A549 (cell line): ENCODE measurements at regions of chr20 and their contacts with region 1.

Region 1: GRCh38 chr20:1503564-1504227 is 12.5 kb upstream of the SIRPB2 start:
- DNase-seq: peak; percentile 95
- ATAC-seq: peak; percentile 98 to 100
- H3K4me3 ChIP-seq: no peak overlapping the region
- H3K27ac ChIP-seq: no peak overlapping the region
- H3K4me1 ChIP-seq: peaks cover 9% of the 10 kb centered on the region; the same call in 1 of the 3 replicates
- CTCF ChIP-seq: peak; percentile 100
- EP300 ChIP-seq: no peak
- POLR2A ChIP-seq: no peak
- RAD21 ChIP-seq: peak; percentile 98 to 99

Region 2: DNA sequence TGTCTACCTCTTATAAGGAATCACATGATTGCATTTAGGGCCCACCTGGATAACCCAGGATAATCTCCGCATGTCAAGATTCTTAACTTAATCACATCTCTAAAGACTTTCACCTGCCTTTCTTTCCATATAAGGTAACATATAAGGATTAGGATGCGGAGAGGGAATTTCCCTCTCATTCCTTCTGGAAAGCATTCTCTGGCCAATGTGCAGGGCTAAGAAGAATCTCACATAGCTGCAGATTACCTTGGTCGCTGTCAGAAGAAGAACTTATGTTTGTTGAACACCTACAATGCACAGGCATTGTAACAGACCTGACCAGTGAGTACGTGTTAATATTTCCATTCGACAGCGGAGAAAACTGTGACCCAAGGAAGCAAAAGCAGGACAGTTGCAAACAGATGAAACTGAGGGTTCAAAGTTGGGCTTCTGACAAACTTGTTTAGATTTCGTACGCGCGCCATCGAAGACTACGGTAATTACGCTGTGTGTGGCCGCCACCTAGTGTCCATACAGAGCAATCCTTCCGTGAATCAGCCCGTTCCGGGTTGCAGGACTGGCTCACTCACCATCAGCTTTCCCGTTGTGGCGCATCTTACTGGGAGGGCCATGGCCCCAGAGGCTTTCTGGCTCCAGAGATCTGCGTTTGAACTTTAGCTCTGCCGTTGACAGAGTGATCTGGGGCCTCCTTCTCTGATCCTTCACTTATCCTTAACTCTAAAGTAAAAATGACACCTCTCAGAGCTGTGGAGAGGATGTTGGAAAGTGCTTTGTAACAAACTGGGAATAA is 290.9 kb before region 1 on chr20:
- CTCF ChIA-PET with region 1: interaction called, 31 read pairs
- POLR2A ChIA-PET with region 1: no interaction called
- DNase-seq: peak; percentile 82 to 83
- ATAC-seq: peak; percentile 96 to 99
- H3K4me3 ChIP-seq: no peak overlapping the region
- H3K27ac ChIP-seq: no peak overlapping the region
- H3K4me1 ChIP-seq: no peaks in the 10 kb centered on the region
- CTCF ChIP-seq: peak; percentile 92
- EP300 ChIP-seq: no peak
- POLR2A ChIP-seq: no peak
- RAD21 ChIP-seq: peak; percentile 89 to 91

Region 3: DNA sequence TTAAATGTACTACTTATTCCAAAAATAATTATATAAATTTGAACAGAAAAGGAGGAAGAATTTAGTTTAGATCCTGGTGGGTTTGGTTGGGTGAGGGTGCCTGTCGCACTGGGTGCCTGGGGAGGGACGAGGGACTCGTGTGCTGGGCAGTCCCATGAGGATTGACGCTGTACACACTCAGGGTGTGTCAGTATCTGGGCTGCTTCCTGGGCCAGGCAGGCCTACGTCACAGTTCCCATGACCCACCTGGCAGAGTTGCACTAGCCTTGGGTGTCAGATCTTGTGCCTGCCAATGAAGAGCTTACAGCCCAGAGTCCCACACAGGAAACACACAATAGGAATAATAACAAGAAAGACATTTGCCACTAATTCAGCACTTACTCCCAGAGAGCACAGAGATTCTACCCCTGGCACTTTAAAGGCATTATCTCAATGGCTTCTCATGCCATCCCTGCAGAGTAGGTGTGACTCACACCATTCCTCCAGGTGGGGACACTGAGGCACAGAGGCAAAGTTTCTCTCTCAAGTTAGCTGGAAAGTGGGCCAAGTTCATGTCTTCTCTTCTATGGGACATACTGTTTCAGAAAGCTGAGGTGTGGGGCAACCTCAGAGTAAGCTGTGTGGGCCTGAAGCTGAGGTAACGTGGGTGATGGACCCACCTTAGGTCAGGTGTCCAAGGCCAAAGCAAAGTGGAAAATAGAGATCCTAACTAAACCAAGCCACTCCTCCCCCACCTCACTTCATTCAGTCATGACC is 173.4 kb before region 1 on chr20:
- CTCF ChIA-PET with region 1: interaction called, 10 read pairs
- POLR2A ChIA-PET with region 1: interaction called, 3 read pairs
- DNase-seq: peak in 1 of 2 experiments; percentile 19
- ATAC-seq: no peak
- H3K4me3 ChIP-seq: no peak overlapping the region
- H3K27ac ChIP-seq: no peak overlapping the region
- H3K4me1 ChIP-seq: peaks cover 38% of the 10 kb centered on the region
- CTCF ChIP-seq: no peak
- EP300 ChIP-seq: no peak
- POLR2A ChIP-seq: no peak
- RAD21 ChIP-seq: no peak

Region 4: DNA sequence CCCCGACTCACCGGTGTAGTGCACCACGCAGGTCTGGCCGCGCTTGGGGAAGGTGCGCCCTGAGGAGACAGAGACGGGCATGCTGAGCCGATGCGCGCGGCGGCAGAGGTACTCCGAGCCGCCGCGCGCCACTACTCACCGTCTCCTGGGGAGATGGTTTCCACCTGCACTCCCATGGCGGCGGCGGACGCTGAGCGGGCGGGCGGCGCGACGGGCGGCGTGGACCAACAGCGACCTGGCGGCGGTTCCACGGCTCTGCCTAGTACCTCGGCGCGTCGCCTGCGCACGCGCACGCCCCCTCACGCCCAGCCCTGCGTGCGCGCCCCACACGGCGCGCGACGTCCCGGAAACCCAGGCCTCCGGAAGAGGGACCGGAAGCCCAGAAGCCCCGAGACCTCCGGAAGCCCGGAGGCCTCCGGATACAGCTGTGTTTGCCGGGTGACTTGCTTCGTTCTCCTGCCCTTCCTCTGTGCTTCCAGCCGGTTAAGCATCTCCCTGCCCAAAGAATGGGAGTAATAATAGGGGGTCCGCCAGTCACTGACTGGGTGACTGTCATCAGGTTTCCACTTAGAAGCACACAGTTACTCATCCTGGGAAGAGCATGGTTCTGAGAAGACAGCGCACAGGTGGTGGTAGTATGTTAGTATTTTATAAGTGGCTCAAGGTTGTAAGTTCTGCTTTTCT is 110.7 kb before region 1 on chr20 and contains the start of gene FKBP1A:
- CTCF ChIA-PET with region 1: interaction called, 15 read pairs
- POLR2A ChIA-PET with region 1: no interaction called
- DNase-seq: peak; percentile 91
- ATAC-seq: peak; percentile 96 to 98
- H3K4me3 ChIP-seq: peak within 1 kb of the TSS; percentile 96
- H3K27ac ChIP-seq: peak within 1 kb of the TSS; percentile 89 to 95
- H3K4me1 ChIP-seq: peaks cover 27% of the 10 kb centered on the region; the same call in 2 of the 3 replicates
- CTCF ChIP-seq: no peak
- EP300 ChIP-seq: no peak
- POLR2A ChIP-seq: peak; percentile 91
- RAD21 ChIP-seq: 0 out of 5 replicates have a peak, but pooled peaks of 1 of the 2 experiments have one; percentile 8
- polyA plus RNA-seq, gene FKBP1A: 535 and 848 TPM in 2 replicates

Region 5: GRCh38 chr20:1450926-1451491 is 52.7 kb before region 1 on chr20:
- CTCF ChIA-PET with region 1: interaction called, 89 read pairs
- POLR2A ChIA-PET with region 1: no interaction called
- DNase-seq: no peak
- ATAC-seq: no peak
- H3K4me3 ChIP-seq: no peak overlapping the region
- H3K27ac ChIP-seq: no peak overlapping the region
- H3K4me1 ChIP-seq: no peaks in the 10 kb centered on the region
- CTCF ChIP-seq: no peak
- EP300 ChIP-seq: no peak
- POLR2A ChIP-seq: no peak
- RAD21 ChIP-seq: no peak

Region 6: GRCh38 chr20:1491281-1491840 is 12.3 kb before region 1 on chr20 and contains the start of gene SIRPB2:
- CTCF ChIA-PET with region 1: interaction called, 129 read pairs
- POLR2A ChIA-PET with region 1: no interaction called
- DNase-seq: no peak
- ATAC-seq: no peak
- H3K4me3 ChIP-seq: no peak within 1 kb of the TSS
- H3K27ac ChIP-seq: no peak within 1 kb of the TSS
- H3K4me1 ChIP-seq: 0 out of 3 replicates have a peak, but pooled peaks cover 3% of the 10 kb centered on the region
- CTCF ChIP-seq: no peak
- EP300 ChIP-seq: no peak
- POLR2A ChIP-seq: no peak
- RAD21 ChIP-seq: no peak
- polyA plus RNA-seq, gene SIRPB2: not detected in 2 replicates